Tibial artery (tissue), 4 donors: ENCODE measurements at regions of chr2 and their contacts with region 1.

Region 1: GRCh38 chr2:113979191-113980128 is 89.6 kb downstream of the ACTR3 start:
- DNase-seq: no peak
- H3K4me3 ChIP-seq: no peak overlapping the region
- H3K27ac ChIP-seq: no peak overlapping the region
- H3K4me1 ChIP-seq: no peaks in the 10 kb centered on the region
- H3K27me3 ChIP-seq: no peaks in the 10 kb centered on the region
- CTCF ChIP-seq: peak in 1 of 2 experiments; percentile 45

Region 2: DNA sequence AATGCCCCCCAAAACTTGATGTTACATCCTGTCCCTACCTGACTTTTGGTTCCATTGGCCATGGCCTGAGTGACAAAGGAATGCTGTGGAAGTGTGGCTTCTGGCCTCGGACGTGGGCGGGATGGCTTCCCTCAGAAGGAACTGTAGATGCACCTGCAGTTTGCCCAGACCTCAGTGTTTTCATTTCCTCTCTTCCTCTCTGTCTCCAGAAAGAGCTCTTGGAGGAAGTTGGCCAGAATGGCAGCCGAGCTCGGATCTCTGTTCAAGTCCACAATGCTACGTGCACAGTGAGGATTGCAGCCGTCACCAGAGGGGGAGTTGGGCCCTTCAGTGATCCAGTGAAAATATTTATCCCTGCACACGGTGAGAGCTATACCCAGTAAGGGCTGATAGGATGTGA is 1985.4 kb before region 1 on chr2:
- intact Hi-C with region 1: no loop called
- DNase-seq: no peak
- H3K4me3 ChIP-seq: no peak overlapping the region
- H3K27ac ChIP-seq: no peak overlapping the region
- H3K4me1 ChIP-seq: no peaks in the 10 kb centered on the region
- H3K27me3 ChIP-seq: no peaks in the 10 kb centered on the region
- CTCF ChIP-seq: no peak

Region 3: DNA sequence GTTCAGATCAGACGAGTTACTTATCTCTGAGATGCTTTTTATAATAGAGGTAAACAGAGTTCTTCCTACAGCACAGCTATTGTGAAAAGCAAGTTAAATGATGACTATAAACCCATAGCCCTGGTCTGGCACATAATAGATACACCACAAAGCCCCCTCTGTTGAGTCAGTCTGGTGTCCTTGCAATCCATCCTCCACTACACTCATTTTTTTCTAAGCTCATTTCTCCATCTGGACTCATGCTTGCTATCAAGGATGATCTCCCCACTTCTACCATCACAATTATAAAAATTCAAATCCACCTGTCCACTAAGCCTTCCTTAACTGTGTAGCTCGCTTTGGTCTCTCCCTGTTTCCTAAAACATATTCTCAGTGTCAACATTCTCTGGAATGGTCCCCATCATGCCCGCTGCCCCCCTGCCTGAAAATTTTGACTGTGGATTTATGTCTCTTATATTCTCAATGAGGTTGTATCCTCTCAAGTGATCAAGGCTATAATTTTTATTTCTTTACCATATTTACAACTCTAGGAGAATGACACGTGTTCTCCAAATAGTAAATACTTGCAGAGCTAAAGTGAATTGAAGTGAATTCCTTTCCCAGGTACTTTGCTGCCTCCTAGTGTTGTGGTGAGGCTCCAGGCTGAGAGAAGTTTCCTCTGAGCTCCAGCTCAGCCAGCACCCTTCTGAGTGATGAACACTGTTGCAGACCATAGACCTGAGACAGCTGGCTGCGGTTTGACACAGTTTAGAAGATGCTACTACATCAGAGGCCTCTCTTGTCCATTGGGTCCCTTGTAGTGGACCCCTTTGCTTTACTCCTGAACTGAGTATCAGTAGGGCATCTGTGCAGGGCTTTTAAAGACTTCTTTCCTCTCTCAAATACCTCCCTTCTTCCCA is 571.7 kb after region 1 on chr2:
- intact Hi-C with region 1: loop called (anchors 10 kb)
- DNase-seq: peak; percentile 29 to 63
- H3K4me3 ChIP-seq: no peak overlapping the region
- H3K27ac ChIP-seq: no peak overlapping the region
- H3K4me1 ChIP-seq: no peaks in the 10 kb centered on the region
- H3K27me3 ChIP-seq: no peaks in the 10 kb centered on the region
- CTCF ChIP-seq: peak; percentile 53 to 69